ENCODE measurements at regions of chr11 and their contacts with region 1.

Region 1: GRCh38 chr11:45147017-45147728 is 734 bp downstream of the PRDM11 start:
- DNase-seq: peak; percentile 95
- H3K4me3 ChIP-seq: peak overlapping the region; percentile 71 to 80
- H3K27ac ChIP-seq: peak overlapping the region; percentile 88 to 96
- H3K4me1 ChIP-seq: peaks cover 10% of the 10 kb centered on the region
- H3K27me3 ChIP-seq: no peaks in the 10 kb centered on the region
- CTCF ChIP-seq: no peak
- POLR2A ChIP-seq: peak; percentile 69

Region 2: DNA sequence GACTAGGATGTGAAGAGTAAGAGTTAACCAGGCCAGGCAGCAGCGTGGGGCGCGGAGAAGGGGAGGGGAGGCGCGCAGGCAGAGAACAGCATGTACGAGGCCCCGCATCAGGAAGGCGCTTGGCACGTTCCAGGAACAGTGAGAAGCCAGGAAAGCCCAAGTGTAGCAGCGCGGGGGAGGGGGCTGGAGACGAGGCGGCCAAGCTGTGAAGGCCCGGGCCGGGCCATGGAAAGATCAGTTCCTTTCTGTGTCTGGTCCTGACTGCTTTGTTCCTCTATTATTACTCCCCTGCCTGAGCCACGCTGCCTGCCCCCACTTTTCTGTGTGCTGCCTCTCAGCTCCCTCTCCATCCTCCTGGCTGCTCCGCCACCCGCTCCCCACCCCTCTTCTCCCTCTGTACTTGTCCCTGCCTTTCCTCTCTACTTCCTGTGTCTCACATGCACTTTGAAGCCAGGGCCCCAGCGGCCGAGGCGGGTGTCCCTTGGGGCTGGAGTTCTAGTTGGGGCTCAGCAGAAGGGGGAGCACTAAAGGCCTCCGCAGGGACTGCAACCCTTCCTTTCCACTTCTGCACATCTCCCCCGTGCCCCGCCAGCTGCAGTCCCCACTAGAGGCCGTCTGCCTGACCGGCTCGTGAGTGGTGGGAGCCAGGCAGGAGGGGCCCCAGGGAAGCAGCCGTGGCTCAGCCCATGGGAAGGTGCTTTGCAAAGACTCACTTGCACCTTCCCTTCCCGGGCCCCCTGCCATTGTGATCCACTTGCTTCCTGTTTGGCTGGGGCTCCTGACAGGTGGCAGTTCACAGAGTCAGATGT is 62.9 kb after region 1 on chr11:
- intact Hi-C with region 1: loop called (anchors 10 kb)
- DNase-seq: peak; percentile 97
- H3K4me3 ChIP-seq: no peak overlapping the region
- H3K27ac ChIP-seq: peak overlapping the region; percentile 86 to 87
- H3K4me1 ChIP-seq: peaks cover 27% of the 10 kb centered on the region
- H3K27me3 ChIP-seq: no peaks in the 10 kb centered on the region
- CTCF ChIP-seq: peak in 1 of 3 experiments; percentile 2
- POLR2A ChIP-seq: no peak